ENCODE measurements at regions of chr19 and their contacts with region 1.

Region 1: GRCh38 chr19:49676690-49677231 is 310 bp upstream of the PRMT1 start:
- DNase-seq: peak; percentile 93
- ATAC-seq: peak; percentile 67
- H3K4me3 Mint-ChIP-seq: peak overlapping the region; percentile 99
- H3K27ac Mint-ChIP-seq: peak overlapping the region; percentile 99
- H3K4me1 Mint-ChIP-seq: peaks cover 70% of the 10 kb centered on the region
- H3K27me3 Mint-ChIP-seq: no peaks in the 10 kb centered on the region
- CTCF ChIP-seq: no peak

Region 2: DNA sequence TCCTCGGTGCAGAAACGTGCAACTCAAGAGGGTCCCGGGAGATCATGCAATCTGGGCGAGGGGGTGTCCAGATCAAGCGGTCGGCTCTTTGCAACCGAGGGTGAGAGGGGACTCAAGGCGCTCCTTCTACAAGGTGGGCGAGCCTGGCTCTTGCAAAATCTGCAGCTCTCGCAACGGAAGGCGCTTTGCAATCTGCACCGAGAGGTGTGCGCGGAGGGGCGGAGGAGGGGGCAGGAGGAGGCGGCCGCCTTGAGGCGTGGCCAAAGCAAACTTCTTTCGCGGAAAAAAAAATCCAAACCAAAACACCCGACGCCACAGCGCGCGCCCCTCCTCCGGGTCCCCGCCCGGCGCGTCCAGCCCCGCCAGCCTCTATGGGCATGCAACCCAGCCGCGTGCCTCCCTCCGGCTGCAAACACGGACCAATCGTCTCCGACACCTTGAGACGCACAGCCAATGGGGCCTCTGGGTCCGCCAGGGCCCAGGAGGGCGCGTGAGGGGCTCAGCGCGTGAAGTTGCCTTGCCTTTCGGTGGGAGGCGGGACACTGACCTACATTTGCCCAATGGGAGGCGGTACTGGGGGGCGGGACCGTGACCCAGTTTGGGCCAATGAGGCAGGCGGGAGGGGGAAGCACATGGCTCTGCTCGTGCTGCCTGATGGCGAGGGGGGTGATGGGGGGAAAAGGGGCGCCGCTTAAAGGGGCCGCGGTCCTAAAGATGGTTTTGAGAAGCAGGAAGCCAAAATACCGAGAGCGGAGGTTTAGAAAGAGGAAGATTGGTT is 1039.4 kb before region 1 on chr19 and contains the start of gene DBP:
- CTCF ChIA-PET with region 1: no interaction called
- POLR2A ChIA-PET with region 1: no interaction called
- intact Hi-C with region 1: loop called (anchors 5 kb)
- DNase-seq: peak; percentile 97
- ATAC-seq: peak; percentile 72
- H3K4me3 Mint-ChIP-seq: peak within 1 kb of the TSS; percentile 93
- H3K27ac Mint-ChIP-seq: peak within 1 kb of the TSS; percentile 99
- H3K4me1 Mint-ChIP-seq: peaks cover 68% of the 10 kb centered on the region
- H3K27me3 Mint-ChIP-seq: no peaks in the 10 kb centered on the region
- CTCF ChIP-seq: no peak
- total RNA-seq, gene DBP: 8.7 and 9.2 TPM in 2 replicates

Region 3: DNA sequence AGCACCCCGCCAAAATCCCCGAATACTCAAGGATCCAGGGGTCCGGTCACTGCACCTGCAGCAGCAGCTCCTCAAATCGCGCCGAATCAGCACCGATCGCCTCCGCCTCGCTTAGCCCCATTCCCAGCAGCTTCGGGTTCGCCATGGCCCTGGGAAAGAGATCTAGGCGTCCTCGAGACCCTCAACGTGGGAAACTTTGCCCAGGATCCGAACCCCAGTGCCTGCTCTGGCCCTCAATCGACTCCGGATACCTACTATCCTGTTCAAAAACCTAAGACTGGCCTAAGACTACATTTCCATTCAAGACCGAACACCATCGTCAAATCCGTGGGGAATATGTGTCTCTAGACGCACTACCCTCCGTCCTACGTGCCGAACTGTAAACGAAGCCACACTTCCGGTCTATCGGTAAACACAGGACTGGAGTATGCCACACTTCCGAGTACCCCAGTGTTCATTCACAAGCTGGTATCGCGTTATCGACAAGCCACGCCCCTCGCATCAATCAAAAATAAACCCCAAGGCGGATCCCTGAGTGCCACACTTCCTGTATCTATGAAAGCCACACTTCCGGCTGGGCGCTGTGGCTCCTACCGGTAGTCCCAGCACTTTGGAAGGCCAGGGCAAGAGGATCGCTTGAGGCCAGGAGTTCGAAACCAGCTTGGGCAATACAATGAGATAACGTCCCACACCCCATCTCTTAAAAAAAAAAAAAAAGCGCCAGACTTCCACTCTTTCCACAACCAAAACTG is 225.2 kb before region 1 on chr19 and contains the start of gene PIH1D1:
- CTCF ChIA-PET with region 1: no interaction called
- POLR2A ChIA-PET with region 1: interaction called, 12 read pairs
- intact Hi-C with region 1: loop called (anchors 1 kb)
- DNase-seq: peak; percentile 79
- ATAC-seq: peak; percentile 60
- H3K4me3 Mint-ChIP-seq: peak within 1 kb of the TSS; percentile 99
- H3K27ac Mint-ChIP-seq: peak within 1 kb of the TSS; percentile 100
- H3K4me1 Mint-ChIP-seq: peaks cover 55% of the 10 kb centered on the region
- H3K27me3 Mint-ChIP-seq: no peaks in the 10 kb centered on the region
- CTCF ChIP-seq: no peak
- total RNA-seq, gene PIH1D1: 110 and 111 TPM in 2 replicates

Region 4: GRCh38 chr19:49546825-49547565 is 129.8 kb before region 1 on chr19:
- CTCF ChIA-PET with region 1: interaction called, 16 read pairs
- POLR2A ChIA-PET with region 1: interaction called, 8 read pairs
- intact Hi-C with region 1: loop called (anchors 1 kb)
- DNase-seq: no peak
- ATAC-seq: peak; percentile 76
- H3K4me3 Mint-ChIP-seq: peak overlapping the region; percentile 47
- H3K27ac Mint-ChIP-seq: no peak overlapping the region
- H3K4me1 Mint-ChIP-seq: peaks cover 8% of the 10 kb centered on the region
- H3K27me3 Mint-ChIP-seq: no peaks in the 10 kb centered on the region
- CTCF ChIP-seq: peak; percentile 52

Region 5: GRCh38 chr19:49640113-49640898 is 36.5 kb before region 1 on chr19 and contains the start of gene RRAS:
- CTCF ChIA-PET with region 1: interaction called, 8 read pairs
- POLR2A ChIA-PET with region 1: interaction called, 97 read pairs
- intact Hi-C with region 1: loop called (anchors 1 kb)
- DNase-seq: peak; percentile 97
- ATAC-seq: peak; percentile 69
- H3K4me3 Mint-ChIP-seq: peak within 1 kb of the TSS; percentile 93
- H3K27ac Mint-ChIP-seq: peak within 1 kb of the TSS; percentile 96
- H3K4me1 Mint-ChIP-seq: peaks cover 59% of the 10 kb centered on the region
- H3K27me3 Mint-ChIP-seq: no peaks in the 10 kb centered on the region
- CTCF ChIP-seq: no peak
- total RNA-seq, gene RRAS: 4.8 and 5.1 TPM in 2 replicates

Region 6: DNA sequence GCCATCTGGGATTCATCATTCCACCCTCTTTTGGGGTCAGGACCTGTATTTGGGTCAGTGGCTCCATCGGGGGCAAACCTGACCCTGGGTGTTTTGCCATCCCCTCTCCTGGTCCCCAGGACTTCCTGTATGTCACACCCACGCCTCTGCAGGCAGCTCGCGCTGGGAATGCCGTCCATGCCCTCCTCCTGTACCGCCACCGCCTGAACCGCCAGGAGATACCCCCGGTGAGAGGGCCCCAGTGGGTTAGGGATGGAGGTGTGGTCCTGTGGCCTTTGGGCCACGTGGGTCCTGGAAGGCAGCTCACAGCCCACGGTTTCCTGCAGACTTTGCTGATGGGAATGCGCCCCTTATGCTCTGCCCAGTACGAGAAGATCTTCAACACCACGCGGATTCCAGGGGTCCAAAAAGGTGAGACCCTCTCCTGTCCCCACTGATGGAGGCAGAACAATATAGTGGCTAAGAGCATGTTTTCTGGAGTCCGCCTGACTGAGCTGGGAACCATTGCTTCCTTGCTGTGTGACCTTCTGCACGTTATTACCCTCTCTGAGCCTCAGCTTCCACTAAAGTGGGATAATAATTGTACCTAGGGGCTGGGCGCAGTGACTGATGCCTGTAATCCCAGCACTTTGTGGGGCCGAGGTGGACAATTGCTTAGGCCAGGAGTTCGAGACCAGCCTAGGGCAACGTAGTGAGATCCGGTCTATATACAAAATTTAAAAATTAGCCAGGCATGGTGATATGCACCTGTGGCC is 28.3 kb after region 1 on chr19:
- CTCF ChIA-PET with region 1: no interaction called
- POLR2A ChIA-PET with region 1: no interaction called
- intact Hi-C with region 1: no loop called
- DNase-seq: no peak
- ATAC-seq: no peak
- H3K4me3 Mint-ChIP-seq: no peak overlapping the region
- H3K27ac Mint-ChIP-seq: no peak overlapping the region
- H3K4me1 Mint-ChIP-seq: no peaks in the 10 kb centered on the region
- H3K27me3 Mint-ChIP-seq: peaks cover 10% of the 10 kb centered on the region
- CTCF ChIP-seq: no peak

Region 7: GRCh38 chr19:49817964-49818648 is 141.3 kb after region 1 on chr19 and contains the start of gene MED25:
- CTCF ChIA-PET with region 1: no interaction called
- POLR2A ChIA-PET with region 1: interaction called, 3 read pairs
- intact Hi-C with region 1: loop called (anchors 5 kb)
- DNase-seq: peak; percentile 91
- ATAC-seq: peak; percentile 59
- H3K4me3 Mint-ChIP-seq: peak within 1 kb of the TSS; percentile 98
- H3K27ac Mint-ChIP-seq: peak within 1 kb of the TSS; percentile 99
- H3K4me1 Mint-ChIP-seq: peaks cover 40% of the 10 kb centered on the region
- H3K27me3 Mint-ChIP-seq: no peaks in the 10 kb centered on the region
- CTCF ChIP-seq: no peak
- total RNA-seq, gene MED25: 70.1 and 88.8 TPM in 2 replicates

Region 8: GRCh38 chr19:50329146-50329925 is 652.6 kb after region 1 on chr19 and contains the start of gene KCNC3:
- CTCF ChIA-PET with region 1: no interaction called
- POLR2A ChIA-PET with region 1: no interaction called
- intact Hi-C with region 1: loop called (anchors 5 kb)
- DNase-seq: peak; percentile 91
- ATAC-seq: peak; percentile 64
- H3K4me3 Mint-ChIP-seq: peak within 1 kb of the TSS; percentile 93
- H3K27ac Mint-ChIP-seq: peak within 1 kb of the TSS; percentile 98
- H3K4me1 Mint-ChIP-seq: peaks cover 78% of the 10 kb centered on the region
- H3K27me3 Mint-ChIP-seq: peaks cover 5% of the 10 kb centered on the region
- CTCF ChIP-seq: no peak
- total RNA-seq, gene KCNC3: 34.5 and 44.3 TPM in 2 replicates

Measured in activated B cell treated with CpG ODN at 0.5 μM for 24 hours (primary cell).